A673 (cell line): ENCODE measurements at regions of chr4 and their contacts with region 1.

Region 1: DNA sequence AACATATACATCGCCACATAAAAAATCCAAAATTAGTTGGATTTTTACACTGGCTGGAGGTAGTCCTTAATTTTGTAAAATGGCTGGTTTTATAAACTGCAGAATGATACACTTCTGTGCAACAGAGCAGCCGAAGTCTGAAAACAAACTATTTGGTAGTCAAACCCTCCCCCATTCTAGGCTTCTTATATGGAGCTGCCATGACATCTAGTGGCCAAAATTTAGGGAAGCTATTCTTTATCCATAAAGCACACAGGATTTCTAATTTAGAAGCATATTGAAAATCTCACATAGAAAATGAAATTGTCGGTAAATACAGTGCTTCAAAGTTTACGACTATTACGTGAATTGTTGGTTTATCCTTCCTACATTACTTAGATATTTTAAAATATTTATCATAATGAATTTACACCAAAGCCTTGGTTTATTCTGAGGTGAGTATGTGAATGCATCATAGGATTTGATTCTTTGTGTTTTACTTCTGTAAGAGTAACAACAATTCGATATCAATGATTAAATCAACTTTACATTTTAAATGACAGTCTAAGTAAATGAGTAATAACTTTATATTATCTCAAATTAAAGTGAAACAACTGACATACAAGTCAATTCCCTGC is 113.4 kb upstream of the FAM241A start:
- DNase-seq: peak; percentile 76
- H3K4me3 ChIP-seq: no peak overlapping the region
- H3K27ac ChIP-seq: no peak overlapping the region
- H3K4me1 ChIP-seq: peaks cover 17% of the 10 kb centered on the region
- H3K27me3 ChIP-seq: no peaks in the 10 kb centered on the region
- CTCF ChIP-seq: peak; percentile 78

Region 2: GRCh38 chr4:111854494-111855087 is 177.2 kb before region 1 on chr4:
- CTCF ChIA-PET with region 1: interaction called, 6 read pairs
- POLR2A ChIA-PET with region 1: no interaction called
- intact Hi-C with region 1: loop called (anchors 2 kb)
- DNase-seq: peak; percentile 48
- H3K4me3 ChIP-seq: no peak overlapping the region
- H3K27ac ChIP-seq: no peak overlapping the region
- H3K4me1 ChIP-seq: no peaks in the 10 kb centered on the region
- H3K27me3 ChIP-seq: no peaks in the 10 kb centered on the region
- CTCF ChIP-seq: peak; percentile 76

Region 3: DNA sequence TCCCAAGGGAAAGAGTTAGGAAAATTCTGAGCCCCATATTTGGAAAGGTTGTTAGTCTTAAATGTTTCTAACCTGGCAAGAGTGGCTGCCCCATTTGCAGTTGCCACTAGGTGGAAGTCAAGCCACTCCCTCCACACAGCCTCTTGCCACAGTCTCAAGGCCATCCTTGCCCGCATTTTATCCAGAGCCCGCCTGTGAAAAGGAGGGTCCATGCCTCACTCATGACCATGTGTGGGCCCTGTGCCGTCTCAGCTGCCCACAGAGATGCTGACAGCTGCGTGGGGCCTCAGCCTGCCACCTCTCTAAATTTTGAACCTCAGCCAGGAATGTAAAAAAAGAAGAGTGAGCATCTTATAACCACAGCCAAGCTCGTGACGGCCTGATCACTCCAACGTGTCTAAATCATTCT is 88.0 kb before region 1 on chr4:
- CTCF ChIA-PET with region 1: no interaction called
- POLR2A ChIA-PET with region 1: no interaction called
- intact Hi-C with region 1: loop called (anchors 1 kb)
- DNase-seq: peak; percentile 53
- H3K4me3 ChIP-seq: no peak overlapping the region
- H3K27ac ChIP-seq: no peak overlapping the region
- H3K4me1 ChIP-seq: no peaks in the 10 kb centered on the region
- H3K27me3 ChIP-seq: no peaks in the 10 kb centered on the region
- CTCF ChIP-seq: peak; percentile 54

Region 4: DNA sequence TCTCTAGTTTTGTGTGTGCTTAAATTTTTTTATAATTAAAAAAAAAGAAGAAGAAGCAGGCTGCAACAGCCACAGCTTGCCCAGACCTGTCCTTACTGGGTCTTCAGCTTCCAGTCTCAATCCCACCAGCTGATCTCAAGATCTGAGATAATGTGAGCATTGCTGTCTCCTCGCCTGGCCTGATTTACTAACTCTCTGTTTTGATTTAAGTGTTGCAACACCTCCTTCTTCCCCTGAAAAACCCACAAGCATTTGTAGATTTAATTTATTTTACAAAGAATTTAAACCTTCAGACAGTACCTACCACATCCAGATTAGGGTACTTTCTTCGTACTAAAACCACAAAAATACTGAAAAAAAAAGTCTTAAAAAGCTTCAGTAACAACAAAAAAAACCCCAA is 151.4 kb after region 1 on chr4:
- CTCF ChIA-PET with region 1: no interaction called
- POLR2A ChIA-PET with region 1: no interaction called
- intact Hi-C with region 1: no loop called
- DNase-seq: no peak
- H3K4me3 ChIP-seq: no peak overlapping the region
- H3K27ac ChIP-seq: no peak overlapping the region
- H3K4me1 ChIP-seq: no peaks in the 10 kb centered on the region
- H3K27me3 ChIP-seq: no peaks in the 10 kb centered on the region
- CTCF ChIP-seq: no peak